ENCODE measurements at regions of chr6 and their contacts with region 1.

Region 1: GRCh38 chr6:106979427-106979884 is 4.9 kb upstream of the CD24 start:
- DNase-seq: peak; percentile 94
- ATAC-seq: peak; percentile 59
- H3K4me3 Mint-ChIP-seq: peak overlapping the region; percentile 19; the same call in 1 of the 2 replicates
- H3K27ac Mint-ChIP-seq: peak overlapping the region; percentile 96
- H3K4me1 Mint-ChIP-seq: peaks cover 45% of the 10 kb centered on the region
- H3K27me3 Mint-ChIP-seq: no peaks in the 10 kb centered on the region
- CTCF ChIP-seq: peak; percentile 91

Region 2: DNA sequence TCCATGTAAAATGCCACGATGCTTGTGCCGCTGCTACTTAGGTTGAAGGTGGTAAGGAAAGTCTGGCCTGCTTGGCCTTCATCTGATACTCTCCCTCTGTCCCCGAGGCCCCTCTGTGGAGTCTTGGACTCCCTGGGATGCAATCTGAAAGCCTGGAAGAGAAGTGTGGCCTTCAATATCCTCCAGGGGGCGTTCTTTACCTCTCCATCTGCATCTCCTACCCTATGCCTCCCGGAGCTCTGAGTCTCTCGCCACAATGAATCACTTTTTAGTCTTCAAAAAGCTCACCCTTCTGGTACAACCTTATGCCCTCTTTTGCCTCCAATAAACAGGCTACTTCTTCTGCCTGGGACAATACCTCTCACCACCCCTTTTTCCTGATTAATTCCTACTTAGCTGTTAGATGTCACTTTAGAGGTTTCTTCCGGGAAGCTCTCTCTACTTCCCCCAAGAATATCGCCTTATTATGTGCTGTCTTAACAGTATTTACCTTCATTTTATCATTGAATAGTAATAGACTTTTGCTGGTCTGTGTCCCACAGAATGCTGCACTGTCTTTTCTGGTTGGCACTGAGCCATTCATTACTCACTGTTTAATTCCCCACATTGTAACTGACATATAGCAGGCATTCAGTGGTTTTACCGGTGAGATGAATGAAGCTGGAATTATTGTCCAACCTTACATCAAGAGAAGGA is 640.0 kb before region 1 on chr6:
- CTCF ChIA-PET with region 1: interaction called, 13 read pairs
- POLR2A ChIA-PET with region 1: no interaction called
- DNase-seq: peak; percentile 57
- ATAC-seq: peak; percentile 99
- H3K4me3 Mint-ChIP-seq: no peak overlapping the region
- H3K27ac Mint-ChIP-seq: no peak overlapping the region
- H3K4me1 Mint-ChIP-seq: peaks cover 3% of the 10 kb centered on the region
- H3K27me3 Mint-ChIP-seq: no peaks in the 10 kb centered on the region
- CTCF ChIP-seq: peak; percentile 84

Region 3: DNA sequence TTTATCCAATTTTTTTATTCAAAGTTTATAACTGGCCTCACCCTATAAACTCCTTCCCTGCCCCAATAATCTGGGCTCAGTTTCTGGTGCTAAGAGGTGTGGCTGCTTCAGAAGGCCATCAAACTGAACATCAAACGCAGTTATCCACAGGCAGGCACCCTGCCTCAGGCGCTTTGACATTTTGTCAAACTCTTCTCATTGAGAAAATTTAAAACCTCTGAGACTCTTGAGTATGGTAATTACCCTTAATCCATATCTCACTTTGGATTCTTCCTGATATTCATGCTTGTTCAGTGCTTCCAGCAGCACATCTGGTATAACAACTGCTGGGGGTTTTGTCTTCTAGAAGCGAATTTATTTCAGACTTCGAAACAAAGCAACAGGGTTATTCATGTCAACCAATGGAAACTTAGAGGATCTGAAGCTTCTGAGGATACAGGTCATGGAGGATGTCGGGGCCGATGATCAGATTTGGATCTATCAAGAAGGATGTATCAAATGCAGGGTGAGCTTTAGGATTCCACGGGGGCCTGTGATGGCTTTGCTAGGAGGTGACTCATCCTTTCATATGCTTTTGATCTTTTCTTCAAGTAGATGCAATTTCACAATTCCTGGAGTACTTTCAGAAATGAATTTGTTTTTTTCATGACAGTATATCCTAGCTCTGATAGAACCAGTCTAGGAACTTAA is 418.3 kb before region 1 on chr6:
- CTCF ChIA-PET with region 1: interaction called, 33 read pairs
- POLR2A ChIA-PET with region 1: interaction called, 4 read pairs
- DNase-seq: no peak
- ATAC-seq: no peak
- H3K4me3 Mint-ChIP-seq: no peak overlapping the region
- H3K27ac Mint-ChIP-seq: no peak overlapping the region
- H3K4me1 Mint-ChIP-seq: peaks cover 21% of the 10 kb centered on the region
- H3K27me3 Mint-ChIP-seq: no peaks in the 10 kb centered on the region
- CTCF ChIP-seq: no peak

Region 4: DNA sequence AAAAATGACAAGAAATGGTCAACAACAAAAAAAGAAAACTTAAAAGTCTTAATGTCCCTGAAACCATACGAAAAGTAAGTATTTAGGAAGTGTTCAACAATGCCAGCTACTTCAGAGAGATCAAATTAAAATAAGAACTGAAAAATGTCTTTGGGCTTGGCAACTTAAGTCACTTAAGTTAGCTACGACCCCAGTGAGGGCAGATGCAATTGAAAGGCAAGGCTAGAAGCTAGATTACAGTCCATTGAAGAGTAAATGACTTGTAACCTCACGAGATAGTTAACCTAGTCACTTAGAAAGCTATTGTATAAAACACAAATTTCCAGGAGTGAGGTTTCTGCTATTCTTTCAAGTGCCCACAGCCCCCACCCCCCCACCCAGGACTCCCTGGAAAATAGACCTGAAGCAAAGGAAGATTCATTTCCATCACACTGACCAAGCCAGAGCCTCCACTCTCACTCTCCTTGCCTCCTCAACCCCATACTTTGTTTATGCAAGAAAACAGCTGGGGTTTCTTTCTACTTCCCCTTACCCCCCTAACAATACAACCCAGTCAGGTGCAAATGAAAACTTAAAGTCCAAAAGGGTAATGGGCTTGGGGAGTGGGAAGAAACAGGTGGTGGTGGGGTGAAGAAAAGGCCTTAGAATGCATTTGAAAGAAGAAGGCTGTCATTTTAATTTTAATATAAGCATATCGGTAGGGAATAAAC is 364.7 kb before region 1 on chr6:
- CTCF ChIA-PET with region 1: interaction called, 35 read pairs
- POLR2A ChIA-PET with region 1: interaction called, 3 read pairs
- DNase-seq: no peak
- ATAC-seq: peak; percentile 79
- H3K4me3 Mint-ChIP-seq: peak overlapping the region; percentile 43
- H3K27ac Mint-ChIP-seq: peak overlapping the region; percentile 99
- H3K4me1 Mint-ChIP-seq: peaks cover 75% of the 10 kb centered on the region
- H3K27me3 Mint-ChIP-seq: no peaks in the 10 kb centered on the region
- CTCF ChIP-seq: no peak

Region 5: GRCh38 chr6:106844930-106845329 is 134.5 kb before region 1 on chr6:
- CTCF ChIA-PET with region 1: no interaction called
- POLR2A ChIA-PET with region 1: no interaction called
- DNase-seq: no peak
- ATAC-seq: no peak
- H3K4me3 Mint-ChIP-seq: no peak overlapping the region
- H3K27ac Mint-ChIP-seq: no peak overlapping the region
- H3K4me1 Mint-ChIP-seq: peaks cover 12% of the 10 kb centered on the region
- H3K27me3 Mint-ChIP-seq: no peaks in the 10 kb centered on the region; the same call in 1 of the 2 replicates
- CTCF ChIP-seq: no peak

Region 6: DNA sequence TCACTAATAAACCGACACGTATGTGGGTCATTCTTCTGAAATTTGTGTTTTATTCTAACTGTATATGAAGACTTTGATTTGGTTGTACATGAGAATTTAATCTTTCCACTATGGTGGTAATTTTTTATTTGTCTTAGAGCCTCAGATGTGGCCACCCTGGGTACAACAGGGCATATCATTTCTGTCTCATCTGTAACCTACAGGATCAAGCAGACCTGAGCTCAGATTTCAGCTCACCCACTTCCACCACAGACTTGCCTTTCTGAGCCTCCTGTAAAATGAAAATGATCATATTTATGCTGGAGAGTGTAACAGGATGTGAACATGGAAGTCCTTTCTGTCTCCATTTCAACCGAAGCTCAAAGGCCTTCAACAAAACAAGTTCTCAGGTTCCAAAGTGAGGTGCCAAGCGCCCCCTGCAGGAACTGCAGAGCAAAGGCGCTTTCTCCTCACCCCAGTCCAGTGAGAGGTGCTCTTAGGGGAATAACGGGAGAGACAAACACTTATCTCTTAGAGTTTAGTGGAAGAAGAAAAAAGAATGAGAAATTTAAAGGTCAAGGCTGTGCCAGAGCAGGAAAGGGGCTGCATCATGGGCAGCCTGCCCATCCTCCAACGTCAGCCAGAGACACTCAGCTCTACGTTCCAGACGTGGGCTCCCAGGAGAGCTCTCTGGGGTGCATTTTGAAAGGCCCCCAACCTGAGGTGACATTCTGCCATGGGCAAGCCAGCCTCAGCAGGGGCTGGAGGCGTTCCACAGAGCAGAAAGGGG is 18.1 kb after region 1 on chr6:
- CTCF ChIA-PET with region 1: interaction called, 27 read pairs
- POLR2A ChIA-PET with region 1: no interaction called
- DNase-seq: peak; percentile 86
- ATAC-seq: peak; percentile 91
- H3K4me3 Mint-ChIP-seq: no peak overlapping the region
- H3K27ac Mint-ChIP-seq: no peak overlapping the region
- H3K4me1 Mint-ChIP-seq: peaks cover 20% of the 10 kb centered on the region
- H3K27me3 Mint-ChIP-seq: no peaks in the 10 kb centered on the region; the same call in 1 of the 2 replicates
- CTCF ChIP-seq: peak; percentile 90

Region 7: DNA sequence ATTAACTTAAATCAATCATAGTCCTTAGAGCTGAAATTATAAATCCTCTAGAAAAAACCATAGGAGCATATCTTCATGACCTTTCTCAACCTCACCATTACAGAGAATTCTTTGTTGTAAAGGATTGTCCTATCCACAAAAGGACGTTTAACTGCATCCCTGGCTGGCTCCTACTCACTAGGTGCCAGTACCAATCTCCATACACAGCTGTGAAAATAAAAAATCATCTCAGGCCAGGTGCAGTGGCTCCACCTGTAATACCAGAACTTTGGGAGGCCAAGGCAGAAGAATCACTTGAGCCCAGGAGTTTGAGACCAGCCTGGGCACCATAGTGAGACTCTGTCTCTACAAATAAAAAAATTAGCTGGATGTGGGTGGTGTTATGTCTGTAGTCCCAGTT is 390.0 kb after region 1 on chr6:
- CTCF ChIA-PET with region 1: no interaction called
- POLR2A ChIA-PET with region 1: no interaction called
- DNase-seq: no peak
- ATAC-seq: no peak
- H3K4me3 Mint-ChIP-seq: no peak overlapping the region
- H3K27ac Mint-ChIP-seq: no peak overlapping the region
- H3K4me1 Mint-ChIP-seq: no peaks in the 10 kb centered on the region
- H3K27me3 Mint-ChIP-seq: no peaks in the 10 kb centered on the region
- CTCF ChIP-seq: no peak